ENCODE measurements at regions of chr9 and their contacts with region 1.

Region 1: GRCh38 chr9:19925817-19926503 is 137.1 kb upstream of the SLC24A2 start:
- DNase-seq: peak; percentile 61 to 79
- H3K4me3 ChIP-seq: peak overlapping the region; percentile 21
- H3K4me3 Mint-ChIP-seq: peak overlapping the region; percentile 83
- H3K27ac Mint-ChIP-seq: peak overlapping the region; percentile 53
- H3K4me1 ChIP-seq: no peaks in the 10 kb centered on the region
- H3K4me1 Mint-ChIP-seq: peaks cover 8% of the 10 kb centered on the region
- H3K27me3 ChIP-seq: no peaks in the 10 kb centered on the region
- H3K27me3 Mint-ChIP-seq: peaks cover 2% of the 10 kb centered on the region
- CTCF ChIP-seq: peak; percentile 79 to 85

Region 2: GRCh38 chr9:19471737-19472648 is 454.0 kb before region 1 on chr9:
- CTCF ChIA-PET with region 1: no interaction called
- POLR2A ChIA-PET with region 1: no interaction called
- intact Hi-C with region 1: loop called (anchors 1 kb)
- DNase-seq: peak; percentile 58 to 73
- H3K4me3 ChIP-seq: no peak overlapping the region
- H3K4me3 Mint-ChIP-seq: peak overlapping the region; percentile 20
- H3K27ac Mint-ChIP-seq: no peak overlapping the region
- H3K4me1 ChIP-seq: no peaks in the 10 kb centered on the region
- H3K4me1 Mint-ChIP-seq: no peaks in the 10 kb centered on the region
- H3K27me3 ChIP-seq: no peaks in the 10 kb centered on the region
- H3K27me3 Mint-ChIP-seq: peaks cover 14% of the 10 kb centered on the region
- CTCF ChIP-seq: peak; percentile 64 to 81

Region 3: DNA sequence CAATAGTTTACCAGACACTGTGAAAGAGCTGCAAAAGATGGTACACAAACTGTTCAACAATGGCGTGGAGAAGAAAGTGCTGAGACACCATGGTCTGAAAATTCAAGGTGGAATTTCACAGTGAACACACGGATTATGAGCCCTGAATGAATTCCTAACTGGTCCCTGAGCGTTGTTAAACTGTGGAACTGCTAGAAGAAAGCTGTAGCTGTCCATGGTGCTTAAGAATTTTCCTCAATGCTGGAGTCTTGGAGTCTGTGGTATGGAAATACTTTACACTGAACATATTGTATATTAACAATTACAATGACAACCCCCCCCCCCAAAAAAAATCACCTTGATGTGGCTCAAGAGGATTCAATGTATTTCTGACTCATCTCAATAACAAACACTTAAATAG is 205.6 kb before region 1 on chr9:
- CTCF ChIA-PET with region 1: no interaction called
- POLR2A ChIA-PET with region 1: no interaction called
- intact Hi-C with region 1: no loop called
- DNase-seq: peak in 1 of 2 experiments; percentile 35
- H3K4me3 ChIP-seq: no peak overlapping the region
- H3K4me3 Mint-ChIP-seq: no peak overlapping the region
- H3K27ac Mint-ChIP-seq: no peak overlapping the region
- H3K4me1 ChIP-seq: no peaks in the 10 kb centered on the region
- H3K4me1 Mint-ChIP-seq: no peaks in the 10 kb centered on the region
- H3K27me3 ChIP-seq: no peaks in the 10 kb centered on the region
- H3K27me3 Mint-ChIP-seq: peaks cover 5% of the 10 kb centered on the region
- CTCF ChIP-seq: no peak

Region 4: GRCh38 chr9:20125727-20126126 is 199.8 kb after region 1 on chr9:
- CTCF ChIA-PET with region 1: no interaction called
- POLR2A ChIA-PET with region 1: no interaction called
- intact Hi-C with region 1: loop called (anchors 5 kb)
- DNase-seq: no peak
- H3K4me3 ChIP-seq: no peak overlapping the region
- H3K4me3 Mint-ChIP-seq: no peak overlapping the region
- H3K27ac Mint-ChIP-seq: no peak overlapping the region
- H3K4me1 ChIP-seq: no peaks in the 10 kb centered on the region
- H3K4me1 Mint-ChIP-seq: no peaks in the 10 kb centered on the region
- H3K27me3 ChIP-seq: no peaks in the 10 kb centered on the region
- H3K27me3 Mint-ChIP-seq: no peaks in the 10 kb centered on the region
- CTCF ChIP-seq: no peak

Region 5: DNA sequence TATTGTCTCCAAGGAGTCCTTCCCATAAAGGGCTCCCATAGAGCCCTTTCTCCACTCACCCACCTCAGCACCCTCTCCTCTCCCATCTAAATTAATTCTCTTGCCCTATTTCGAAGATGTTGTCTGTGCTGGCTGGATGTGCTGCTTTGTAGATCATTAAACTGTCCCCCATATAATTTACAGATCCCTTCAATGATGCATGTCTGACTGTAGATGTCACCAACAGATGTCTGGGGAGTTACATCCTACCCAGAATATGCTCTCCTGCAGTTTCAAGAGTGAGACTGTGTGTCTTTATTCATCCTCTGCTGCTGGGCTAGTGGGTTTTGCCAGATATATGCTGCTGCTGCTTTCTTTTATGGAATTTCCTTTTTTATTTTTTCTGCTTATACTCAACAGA is 345.1 kb after region 1 on chr9:
- CTCF ChIA-PET with region 1: no interaction called
- POLR2A ChIA-PET with region 1: no interaction called
- intact Hi-C with region 1: loop called (anchors 1 kb)
- DNase-seq: no peak
- H3K4me3 ChIP-seq: no peak overlapping the region
- H3K4me3 Mint-ChIP-seq: no peak overlapping the region
- H3K27ac Mint-ChIP-seq: no peak overlapping the region
- H3K4me1 ChIP-seq: no peaks in the 10 kb centered on the region
- H3K4me1 Mint-ChIP-seq: peaks cover 5% of the 10 kb centered on the region
- H3K27me3 ChIP-seq: no peaks in the 10 kb centered on the region
- H3K27me3 Mint-ChIP-seq: no peaks in the 10 kb centered on the region
- CTCF ChIP-seq: no peak

Region 6: GRCh38 chr9:20407012-20407411 is 481.1 kb after region 1 on chr9:
- CTCF ChIA-PET with region 1: no interaction called
- POLR2A ChIA-PET with region 1: no interaction called
- intact Hi-C with region 1: loop called (anchors 2 kb)
- DNase-seq: no peak
- H3K4me3 ChIP-seq: no peak overlapping the region
- H3K4me3 Mint-ChIP-seq: no peak overlapping the region
- H3K27ac Mint-ChIP-seq: no peak overlapping the region
- H3K4me1 ChIP-seq: peaks cover 19% of the 10 kb centered on the region
- H3K4me1 Mint-ChIP-seq: peaks cover 4% of the 10 kb centered on the region
- H3K27me3 ChIP-seq: no peaks in the 10 kb centered on the region
- H3K27me3 Mint-ChIP-seq: no peaks in the 10 kb centered on the region
- CTCF ChIP-seq: peak in 1 of 2 experiments; percentile 10

Region 7: DNA sequence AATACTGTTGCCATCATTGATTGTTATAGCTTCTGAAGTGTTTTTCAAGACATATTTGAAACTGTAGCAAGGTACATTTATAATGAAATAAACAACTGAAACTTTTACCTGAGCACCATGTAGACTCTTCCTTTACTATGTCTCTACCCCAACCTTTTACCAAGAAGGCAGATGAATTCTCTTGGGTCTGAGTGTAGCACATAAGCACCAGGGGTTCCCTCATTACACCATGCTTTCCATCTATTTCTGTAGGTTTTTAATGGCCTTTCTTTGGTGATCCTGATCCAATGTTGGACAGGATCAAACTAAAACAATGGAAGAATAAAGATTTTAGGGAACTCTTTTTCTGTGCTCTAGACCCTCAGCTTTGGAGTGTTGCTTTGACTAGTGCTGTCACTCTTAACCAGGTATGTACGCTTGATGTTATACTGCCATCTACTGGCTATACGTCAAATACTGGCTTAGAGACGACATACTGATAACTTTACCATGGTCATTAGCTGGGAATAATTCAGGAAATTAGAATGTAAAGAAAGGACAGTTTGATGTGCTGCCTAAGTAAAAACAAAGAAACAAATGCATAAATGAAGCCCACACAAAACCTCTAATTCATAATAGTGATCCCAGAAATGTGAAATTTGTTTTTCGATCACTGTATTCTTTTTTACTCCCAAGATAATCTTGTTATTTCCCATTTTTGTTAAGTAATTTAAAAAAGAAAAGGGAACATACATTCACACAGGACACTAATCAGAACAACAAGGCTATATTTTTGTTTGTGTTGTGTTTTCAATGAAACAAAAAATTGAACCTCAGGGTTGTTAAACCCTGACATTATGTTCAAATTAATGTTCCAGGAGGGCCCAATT is 1185.0 kb after region 1 on chr9:
- CTCF ChIA-PET with region 1: no interaction called
- POLR2A ChIA-PET with region 1: no interaction called
- intact Hi-C with region 1: loop called (anchors 2 kb)
- DNase-seq: peak; percentile 35 to 56
- H3K4me3 ChIP-seq: no peak overlapping the region
- H3K4me3 Mint-ChIP-seq: no peak overlapping the region
- H3K27ac Mint-ChIP-seq: no peak overlapping the region
- H3K4me1 ChIP-seq: peaks cover 13% of the 10 kb centered on the region; the same call in 1 of the 2 replicates
- H3K4me1 Mint-ChIP-seq: peaks cover 7% of the 10 kb centered on the region
- H3K27me3 ChIP-seq: no peaks in the 10 kb centered on the region
- H3K27me3 Mint-ChIP-seq: no peaks in the 10 kb centered on the region
- CTCF ChIP-seq: peak; percentile 49 to 65